ENCODE measurements at regions of chr2 and their contacts with region 1.

Region 1: GRCh38 chr2:176140513-176141317 is 10.6 kb upstream of the HOXD4 start:
- DNase-seq: peak; percentile 72
- H3K4me3 Mint-ChIP-seq: peak overlapping the region; percentile 45
- H3K27ac Mint-ChIP-seq: no peak overlapping the region
- H3K4me1 Mint-ChIP-seq: peaks cover 26% of the 10 kb centered on the region
- H3K27me3 Mint-ChIP-seq: peaks cover 80% of the 10 kb centered on the region

Region 2: GRCh38 chr2:176156301-176156806 is 15.6 kb after region 1 on chr2:
- CTCF ChIA-PET with region 1: interaction called, 22 read pairs
- POLR2A ChIA-PET with region 1: no interaction called
- DNase-seq: no peak
- H3K4me3 Mint-ChIP-seq: no peak overlapping the region
- H3K27ac Mint-ChIP-seq: no peak overlapping the region
- H3K4me1 Mint-ChIP-seq: peaks cover 6% of the 10 kb centered on the region
- H3K27me3 Mint-ChIP-seq: peaks cover 85% of the 10 kb centered on the region

Region 3: DNA sequence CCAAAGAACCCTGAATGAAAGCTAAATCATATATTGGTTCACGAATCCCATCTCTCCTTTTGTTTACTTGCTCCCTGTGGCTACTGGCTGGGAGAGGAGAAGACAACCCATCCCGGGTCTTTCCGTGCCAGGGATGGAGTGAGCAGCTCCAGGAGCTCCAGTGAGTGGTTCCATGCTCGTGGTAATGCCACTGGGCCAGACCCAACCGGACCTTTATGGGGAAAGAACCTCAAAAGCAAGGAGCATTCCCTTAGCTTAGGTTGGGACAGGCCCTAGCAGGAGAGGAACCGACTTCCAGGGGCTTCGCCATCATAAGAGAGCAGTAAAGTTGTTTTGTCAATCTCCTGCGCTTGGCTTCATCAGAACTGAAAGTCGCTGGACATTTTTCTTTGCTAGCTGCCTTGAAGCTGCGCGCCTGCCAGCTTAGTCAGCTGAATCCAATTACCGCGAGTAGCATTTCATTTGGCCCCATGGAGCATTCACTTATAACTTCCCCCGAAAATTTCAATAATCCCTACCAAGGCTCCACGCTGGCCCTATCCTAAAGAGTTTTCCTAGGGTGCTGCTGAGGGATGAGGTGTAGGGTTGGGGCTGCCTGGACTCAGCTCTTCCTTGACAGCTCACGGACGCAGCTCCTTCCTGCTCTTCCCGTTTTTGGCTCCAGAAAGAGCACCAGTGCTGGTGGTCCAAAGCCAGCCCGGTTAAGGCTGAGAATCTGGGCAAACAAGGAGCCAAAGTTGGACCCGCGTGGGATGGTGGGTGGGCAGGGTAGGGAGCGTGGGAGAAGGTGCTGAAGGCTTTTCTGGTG is 21.3 kb after region 1 on chr2:
- CTCF ChIA-PET with region 1: interaction called, 22 read pairs
- POLR2A ChIA-PET with region 1: no interaction called
- DNase-seq: no peak
- H3K4me3 Mint-ChIP-seq: no peak overlapping the region
- H3K27ac Mint-ChIP-seq: no peak overlapping the region
- H3K4me1 Mint-ChIP-seq: peaks cover 9% of the 10 kb centered on the region
- H3K27me3 Mint-ChIP-seq: peaks cover 89% of the 10 kb centered on the region

Region 4: GRCh38 chr2:176325732-176326131 is 185.0 kb after region 1 on chr2:
- CTCF ChIA-PET with region 1: no interaction called
- POLR2A ChIA-PET with region 1: no interaction called
- DNase-seq: no peak
- H3K4me3 Mint-ChIP-seq: no peak overlapping the region
- H3K27ac Mint-ChIP-seq: no peak overlapping the region
- H3K4me1 Mint-ChIP-seq: no peaks in the 10 kb centered on the region
- H3K27me3 Mint-ChIP-seq: no peaks in the 10 kb centered on the region

Region 5: GRCh38 chr2:176454893-176455811 is 314.4 kb after region 1 on chr2:
- CTCF ChIA-PET with region 1: interaction called, 18 read pairs
- POLR2A ChIA-PET with region 1: no interaction called
- DNase-seq: peak; percentile 82
- H3K4me3 Mint-ChIP-seq: no peak overlapping the region
- H3K27ac Mint-ChIP-seq: no peak overlapping the region
- H3K4me1 Mint-ChIP-seq: no peaks in the 10 kb centered on the region
- H3K27me3 Mint-ChIP-seq: peaks cover 32% of the 10 kb centered on the region

Region 6: DNA sequence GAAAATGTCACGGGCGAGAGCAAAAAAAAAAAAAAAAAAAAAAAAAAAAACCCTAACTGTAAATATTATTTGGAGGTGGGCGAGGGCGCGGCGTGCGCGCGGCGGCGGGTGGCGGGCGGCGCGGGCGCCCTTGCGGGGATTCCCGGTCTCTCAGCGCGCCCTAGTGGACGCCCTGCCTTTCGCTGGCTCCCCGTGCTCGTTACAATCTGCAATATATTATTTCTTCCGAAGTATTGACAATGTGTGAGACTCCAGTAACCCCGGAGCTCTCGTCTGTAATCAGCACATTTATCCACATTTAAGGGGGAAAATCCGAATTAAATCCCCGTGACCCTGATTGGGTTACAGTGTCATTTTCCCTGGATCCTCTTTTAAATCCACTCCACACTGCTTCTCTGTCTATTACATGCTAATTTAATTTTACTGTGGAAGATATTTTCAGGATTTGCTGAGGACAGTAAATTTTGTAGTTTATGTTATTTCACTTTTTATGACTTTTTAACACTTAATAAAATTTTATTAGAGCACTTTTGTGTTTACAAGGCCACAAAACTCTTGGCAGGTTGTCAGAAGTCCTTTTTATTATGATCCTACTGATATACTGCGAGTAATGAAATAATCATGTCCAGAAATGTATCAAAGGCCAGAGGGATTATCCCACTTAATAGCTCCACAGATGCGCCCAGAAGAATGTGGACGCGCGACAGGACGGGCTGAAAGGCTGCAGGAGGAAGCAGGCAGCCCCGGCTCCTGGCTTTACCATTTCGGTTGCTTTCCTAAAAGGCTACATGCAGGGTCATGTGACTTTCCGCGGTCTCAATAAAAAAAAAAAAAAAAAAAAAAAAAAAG is 497.7 kb after region 1 on chr2:
- CTCF ChIA-PET with region 1: interaction called, 15 read pairs
- POLR2A ChIA-PET with region 1: no interaction called
- DNase-seq: peak; percentile 59
- H3K4me3 Mint-ChIP-seq: peak overlapping the region; percentile 43
- H3K27ac Mint-ChIP-seq: no peak overlapping the region
- H3K4me1 Mint-ChIP-seq: peaks cover 2% of the 10 kb centered on the region
- H3K27me3 Mint-ChIP-seq: peaks cover 75% of the 10 kb centered on the region

Measured in activated CD4-positive, alpha-beta T cell treated with anti-CD3 and anti-CD28 coated beads, Interleukin-2, amount 10 ng/mL, durations not matched to agents 7 days and 5 days (primary cell).